CD8-positive, alpha-beta T cell (primary cell): ENCODE measurements at regions of chr21 and their contacts with region 1.

Region 1: GRCh38 chr21:36330904-36331303 is 10.9 kb downstream of the MORC3 start:
- DNase-seq: peak in 7 of 9 experiments; percentile 16 to 75 (median 51)
- ATAC-seq: peak; percentile 92
- H3K4me3 ChIP-seq: no peak overlapping the region
- H3K4me3 Mint-ChIP-seq: no peak overlapping the region
- H3K27ac ChIP-seq: no peak overlapping the region
- H3K27ac Mint-ChIP-seq: peak overlapping the region; percentile 76
- H3K4me1 ChIP-seq: peaks cover 33% of the 10 kb centered on the region
- H3K4me1 Mint-ChIP-seq: peaks cover 51% of the 10 kb centered on the region
- H3K27me3 ChIP-seq: no peaks in the 10 kb centered on the region
- H3K27me3 Mint-ChIP-seq: no peaks in the 10 kb centered on the region
- CTCF ChIP-seq: peak; percentile 86

Region 2: GRCh38 chr21:36149788-36150711 is 180.9 kb before region 1 on chr21:
- CTCF ChIA-PET with region 1: interaction called, 15 read pairs
- POLR2A ChIA-PET with region 1: no interaction called
- intact Hi-C with region 1: loop called (anchors 1 kb)
- DNase-seq: no peak
- ATAC-seq: peak; percentile 19
- H3K4me3 ChIP-seq: no peak overlapping the region
- H3K4me3 Mint-ChIP-seq: no peak overlapping the region
- H3K27ac ChIP-seq: no peak overlapping the region
- H3K27ac Mint-ChIP-seq: peak overlapping the region; percentile 80
- H3K4me1 ChIP-seq: peaks cover 32% of the 10 kb centered on the region
- H3K4me1 Mint-ChIP-seq: peaks cover 38% of the 10 kb centered on the region
- H3K27me3 ChIP-seq: no peaks in the 10 kb centered on the region
- H3K27me3 Mint-ChIP-seq: no peaks in the 10 kb centered on the region
- CTCF ChIP-seq: no peak